Activated T-helper 2 cell treated with anti-CD3 and anti-CD28 coated beads, Interferon-gamma antibody, Interleukin-2, Interleukin-4, amounts not matched to agents 10 μg/mL and 5 μg/mL and 100 μg/mL, durations not matched to agents 14 hours and 24 hours and 36 hours (primary cell): ENCODE measurements at regions of chr18 and their contacts with region 1.

Region 1: GRCh38 chr18:4106407-4107033 is 348.6 kb downstream of the DLGAP1 start:
- DNase-seq: peak; percentile 34
- H3K4me3 Mint-ChIP-seq: no peak overlapping the region
- H3K27ac Mint-ChIP-seq: no peak overlapping the region
- H3K4me1 Mint-ChIP-seq: no peaks in the 10 kb centered on the region
- H3K27me3 Mint-ChIP-seq: no peaks in the 10 kb centered on the region

Region 2: DNA sequence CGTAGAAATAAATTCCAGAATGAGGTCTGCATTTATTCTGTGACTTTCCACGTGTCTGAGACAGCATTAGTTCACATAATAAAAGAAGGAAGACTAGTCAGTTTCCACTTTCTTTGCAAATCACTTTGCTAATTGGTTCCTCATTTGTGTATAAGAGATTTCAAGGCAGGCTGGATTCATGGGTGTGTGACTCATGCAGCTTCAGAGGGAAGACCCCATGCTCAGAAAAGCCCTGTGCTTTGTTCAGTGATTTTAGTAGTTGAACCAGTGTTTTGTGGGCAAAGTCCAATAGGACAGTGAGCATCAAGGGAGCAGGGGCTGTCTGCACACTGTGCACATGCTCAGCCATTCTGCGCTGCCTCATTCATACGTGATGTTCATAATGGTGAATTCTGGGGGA is 50.8 kb after region 1 on chr18:
- intact Hi-C with region 1: loop called (anchors 5 kb)
- DNase-seq: no peak
- H3K4me3 Mint-ChIP-seq: no peak overlapping the region
- H3K27ac Mint-ChIP-seq: no peak overlapping the region
- H3K4me1 Mint-ChIP-seq: no peaks in the 10 kb centered on the region
- H3K27me3 Mint-ChIP-seq: no peaks in the 10 kb centered on the region

Region 3: DNA sequence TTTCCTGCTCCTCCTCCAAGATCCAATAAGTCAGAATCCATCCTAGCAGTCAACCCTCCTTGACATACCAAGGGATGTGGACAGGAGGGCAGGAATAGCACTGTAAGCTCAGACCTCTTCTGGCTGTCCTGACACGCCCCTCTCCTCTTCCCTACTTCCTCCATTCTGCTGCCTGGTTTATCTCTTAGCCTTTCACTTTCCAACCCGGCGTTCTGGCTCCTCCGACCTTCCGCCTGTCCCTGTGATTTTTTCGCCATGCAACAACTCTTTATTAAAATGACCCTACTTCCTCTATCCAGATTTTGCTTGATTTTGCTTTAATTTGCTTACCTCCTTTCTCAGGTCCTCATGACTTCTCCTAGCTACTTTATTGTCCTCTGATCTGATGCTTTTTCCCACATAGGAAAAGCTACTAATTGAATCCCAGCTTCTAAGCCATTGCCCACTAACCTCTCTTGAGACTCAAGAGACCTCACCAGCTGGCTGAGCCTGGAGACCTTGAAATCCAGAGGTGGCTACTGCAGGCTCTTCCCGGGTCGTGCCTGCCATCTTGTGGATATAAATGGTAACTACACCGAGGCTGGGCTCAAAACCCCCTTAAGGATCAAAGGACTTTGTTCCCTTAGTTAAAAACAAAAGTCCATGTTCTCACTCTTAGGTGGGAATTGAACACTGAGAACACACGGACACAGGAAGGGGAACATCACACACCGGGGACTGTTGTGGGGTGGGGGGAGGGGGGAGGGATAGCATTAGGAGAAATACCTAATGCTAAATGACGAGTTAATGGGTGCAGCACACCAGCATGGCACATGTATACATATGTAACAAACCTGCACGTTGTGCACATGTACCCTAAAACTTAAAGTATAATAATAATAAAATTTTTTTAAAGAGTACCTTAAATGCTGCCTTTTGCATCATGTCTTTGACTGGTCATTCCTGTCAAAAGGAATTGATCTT is 951.1 kb after region 1 on chr18:
- intact Hi-C with region 1: loop called (anchors 1 kb)
- DNase-seq: peak; percentile 23
- H3K4me3 Mint-ChIP-seq: no peak overlapping the region
- H3K27ac Mint-ChIP-seq: no peak overlapping the region
- H3K4me1 Mint-ChIP-seq: peaks cover 8% of the 10 kb centered on the region
- H3K27me3 Mint-ChIP-seq: peaks cover 4% of the 10 kb centered on the region